Posterior vena cava (tissue), 2 donors: ENCODE measurements at regions of chr2 and their contacts with region 1.

Region 1: GRCh38 chr2:39728941-39729351 is 50.1 kb downstream of the THUMPD2 start:
- DNase-seq: no peak

Region 2: DNA sequence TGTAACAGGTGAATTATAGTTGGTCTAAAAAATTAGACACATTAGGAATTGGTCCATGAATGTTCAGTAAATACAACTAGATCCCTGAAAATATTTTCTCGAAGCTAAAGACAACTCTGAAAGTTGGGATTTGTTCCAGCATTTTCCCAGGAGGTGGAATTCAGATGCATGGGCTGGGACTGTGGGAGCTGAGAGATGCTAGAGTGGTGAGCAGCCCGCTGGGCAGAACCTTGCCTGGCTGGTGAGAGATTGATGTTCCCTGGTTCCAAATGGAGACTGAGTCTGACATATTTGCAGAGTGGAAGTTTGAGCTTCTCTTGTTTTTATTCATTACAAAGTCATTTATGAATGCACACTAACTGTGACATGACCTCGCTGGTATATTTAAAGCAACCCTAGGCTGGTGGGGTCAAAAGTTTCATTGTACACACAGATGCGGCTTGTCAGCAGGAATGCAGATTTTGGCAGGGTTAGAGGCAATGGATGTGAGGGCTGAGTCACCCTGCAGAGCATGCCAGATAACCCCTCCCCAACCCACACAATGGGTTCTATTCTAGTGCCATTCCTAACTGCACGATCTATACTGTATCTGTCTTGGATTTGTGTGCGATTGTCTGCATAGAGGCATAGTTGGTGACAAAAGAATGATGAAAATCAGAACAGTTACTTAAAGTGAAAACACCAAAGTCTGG is 86.7 kb before region 1 on chr2:
- intact Hi-C with region 1: no loop called
- DNase-seq: no peak

Region 3: DNA sequence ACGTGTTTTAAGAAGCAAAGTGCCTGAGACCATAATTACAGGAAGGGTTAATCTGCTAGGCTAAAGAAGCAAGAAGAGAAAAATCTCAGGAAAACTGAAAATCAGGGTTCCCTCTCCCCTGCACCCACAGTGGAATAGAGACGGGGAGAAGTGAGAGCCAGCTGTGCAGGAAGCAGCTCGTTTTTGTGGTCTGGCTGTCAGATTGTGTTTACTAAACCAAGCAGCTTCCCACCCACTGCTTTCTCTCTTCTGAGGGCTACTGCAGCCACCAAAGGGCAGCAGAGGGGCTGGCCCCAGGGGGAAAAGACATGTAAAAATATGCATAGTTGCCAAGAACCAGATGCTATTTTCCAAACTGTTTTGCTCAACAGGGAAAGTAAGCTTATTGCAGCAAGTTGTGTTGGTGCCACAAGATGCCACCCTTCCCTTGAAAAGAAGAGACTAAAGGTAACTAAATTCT is 122.7 kb after region 1 on chr2:
- intact Hi-C with region 1: loop called in 1 of 2 experiments (anchors 10 kb)
- DNase-seq: no peak